Dendritic cell treated with granulocyte-macrophage colony-stimulating factor and Interleukin-4, amounts not matched to agents 40 ng/mL and 50 ng/mL, for 4 days (primary cell): ENCODE measurements at regions of chr1 and their contacts with region 1.

Region 1: DNA sequence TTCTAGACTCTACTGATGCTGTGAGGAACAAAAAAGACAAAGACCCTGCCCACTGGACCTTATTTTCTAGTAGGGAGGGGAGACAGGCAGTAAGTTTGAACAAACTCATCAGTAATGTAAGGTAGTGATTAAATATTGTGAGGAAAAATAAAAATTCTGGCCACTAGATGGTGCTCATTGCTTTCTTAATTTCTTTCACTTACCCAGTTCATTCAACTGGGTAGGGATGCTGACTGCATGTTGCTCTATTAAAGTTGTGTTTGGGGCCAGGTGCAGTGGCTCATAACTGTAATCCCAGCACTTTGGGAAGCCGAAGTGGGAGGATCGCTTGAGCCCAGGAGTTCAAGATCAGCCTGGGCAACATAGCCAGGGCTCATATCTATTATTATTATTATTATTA is 6.3 kb upstream of the KYAT3 start:
- H3K4me3 Mint-ChIP-seq: no peak overlapping the region
- H3K27ac Mint-ChIP-seq: no peak overlapping the region
- H3K4me1 Mint-ChIP-seq: peaks cover 18% of the 10 kb centered on the region
- H3K27me3 Mint-ChIP-seq: no peaks in the 10 kb centered on the region

Region 2: GRCh38 chr1:89085781-89086180 is 87.1 kb after region 1 on chr1:
- intact Hi-C with region 1: loop called (anchors 5 kb)
- H3K4me3 Mint-ChIP-seq: no peak overlapping the region
- H3K27ac Mint-ChIP-seq: no peak overlapping the region
- H3K4me1 Mint-ChIP-seq: peaks cover 18% of the 10 kb centered on the region
- H3K27me3 Mint-ChIP-seq: no peaks in the 10 kb centered on the region

Region 3: DNA sequence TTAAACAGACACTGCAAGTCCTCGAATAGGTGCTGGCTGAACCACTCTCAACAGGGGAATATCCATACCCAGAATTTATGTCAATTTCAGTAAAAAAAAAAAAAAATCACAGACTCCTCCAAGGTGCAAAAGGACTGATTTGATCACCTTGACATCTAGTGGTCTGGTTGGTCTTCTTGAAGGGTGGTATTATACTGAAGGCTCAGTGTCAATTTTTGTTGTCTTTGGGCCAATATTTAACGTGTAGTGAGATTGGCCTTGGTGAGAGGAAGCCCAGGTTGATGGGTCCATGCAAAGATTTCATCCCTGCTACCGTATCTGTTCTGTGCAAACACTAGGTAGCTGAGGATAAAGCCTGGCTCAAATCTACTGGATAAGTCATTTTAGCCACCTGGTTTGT is 278.0 kb after region 1 on chr1:
- intact Hi-C with region 1: loop called (anchors 5 kb)
- H3K4me3 Mint-ChIP-seq: no peak overlapping the region
- H3K27ac Mint-ChIP-seq: no peak overlapping the region
- H3K4me1 Mint-ChIP-seq: peaks cover 17% of the 10 kb centered on the region
- H3K27me3 Mint-ChIP-seq: no peaks in the 10 kb centered on the region

Region 4: DNA sequence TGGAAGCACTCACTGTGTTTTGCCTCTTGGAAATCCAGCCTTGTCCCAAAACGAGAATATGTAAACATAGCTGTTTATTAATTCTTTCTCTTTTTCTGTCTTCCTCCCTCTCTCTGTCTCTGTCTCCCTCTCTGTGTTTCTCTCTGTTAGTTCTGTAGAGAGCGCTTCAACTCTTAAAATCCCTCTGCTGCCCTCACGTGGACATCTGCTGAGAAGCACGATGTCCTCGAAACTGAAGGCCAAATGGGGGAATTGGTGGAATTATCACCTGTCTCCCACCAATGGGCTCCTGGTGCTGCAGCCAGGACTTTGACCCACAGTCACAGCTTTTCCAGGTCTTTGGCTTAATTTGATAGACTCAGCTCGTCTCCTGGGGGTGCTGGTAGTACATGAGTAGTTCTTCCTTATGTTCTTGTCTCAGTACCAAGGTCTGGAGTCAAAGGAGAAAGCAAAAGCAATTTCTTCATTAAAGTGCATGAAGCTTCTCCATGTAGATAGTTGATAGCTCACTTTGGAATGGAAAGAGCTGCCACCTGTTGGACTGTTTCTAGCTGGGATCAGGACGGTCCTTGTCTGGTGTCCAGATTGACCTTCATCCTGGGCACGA is 359.7 kb after region 1 on chr1:
- intact Hi-C with region 1: loop called (anchors 2 kb)
- H3K4me3 Mint-ChIP-seq: no peak overlapping the region
- H3K27ac Mint-ChIP-seq: no peak overlapping the region
- H3K4me1 Mint-ChIP-seq: peaks cover 26% of the 10 kb centered on the region
- H3K27me3 Mint-ChIP-seq: no peaks in the 10 kb centered on the region

Region 5: GRCh38 chr1:89454845-89455521 is 456.3 kb after region 1 on chr1:
- intact Hi-C with region 1: loop called (anchors 2 kb)
- H3K4me3 Mint-ChIP-seq: no peak overlapping the region
- H3K27ac Mint-ChIP-seq: no peak overlapping the region
- H3K4me1 Mint-ChIP-seq: peaks cover under 1% of the 10 kb centered on the region
- H3K27me3 Mint-ChIP-seq: peaks cover 2% of the 10 kb centered on the region